Gastrocnemius medialis (tissue), 4 donors: ENCODE measurements at regions of chr17 and their contacts with region 1.

Region 1: DNA sequence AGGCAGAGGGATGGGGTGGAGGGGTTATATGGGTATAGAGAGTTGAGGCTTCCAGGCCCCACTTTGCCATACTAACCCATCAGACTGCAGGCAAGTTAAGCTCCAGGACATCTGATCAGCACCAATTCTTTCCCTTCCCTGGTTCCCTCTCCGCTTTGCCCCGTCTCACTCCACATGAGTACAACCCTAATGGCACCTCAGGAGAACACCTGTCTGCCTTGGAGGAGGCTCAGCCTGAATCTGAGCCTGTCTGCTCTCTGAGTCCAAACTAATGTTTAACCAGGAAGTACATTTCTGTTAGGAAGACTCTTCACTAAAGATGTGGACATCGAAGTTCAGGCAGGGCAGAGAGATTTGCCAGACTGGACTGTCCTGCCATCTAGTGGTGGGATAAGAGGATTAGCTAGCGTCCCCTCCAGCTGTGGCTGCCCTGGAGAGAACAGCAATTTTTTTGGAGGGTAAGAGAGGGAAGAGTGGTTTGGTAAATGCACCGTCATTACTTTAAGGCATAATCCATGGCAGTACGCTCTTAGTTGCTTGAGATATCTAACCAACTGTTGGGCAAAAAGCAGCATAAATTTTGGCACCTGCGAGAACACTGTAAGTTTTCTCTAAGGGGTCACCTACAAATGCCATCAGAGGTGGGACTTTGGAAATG is 29.2 kb upstream of the LRRC75A start:
- DNase-seq: peak; percentile 60 to 72
- ATAC-seq: peak; percentile 98 to 99
- H3K4me3 ChIP-seq: no peak overlapping the region
- H3K27ac ChIP-seq: no peak overlapping the region
- H3K4me1 ChIP-seq: peaks cover 0 to 6% of the 10 kb centered on the region in 2 donors
- H3K27me3 ChIP-seq: peaks cover 0 to 18% (median 14%) of the 10 kb centered on the region in 3 donors
- CTCF ChIP-seq: peak; percentile 85 to 96 (median 90)
- POLR2A ChIP-seq: no peak

Region 2: GRCh38 chr17:16380640-16381495 is 140.3 kb before region 1 on chr17 and contains the start of gene UBB:
- in situ Hi-C with region 1: no loop called
- intact Hi-C with region 1: loop called (anchors 1 kb)
- DNase-seq: peak; percentile 97 to 98
- ATAC-seq: peak; percentile 94 to 95
- H3K4me3 ChIP-seq: peak within 1 kb of the TSS; percentile 77 to 85 (median 78)
- H3K27ac ChIP-seq: peak within 1 kb of the TSS; percentile 85 to 94 (median 91)
- H3K4me1 ChIP-seq: peaks cover 37 to 39% of the 10 kb centered on the region in 2 donors
- H3K27me3 ChIP-seq: no peaks in the 10 kb centered on the region
- CTCF ChIP-seq: peak in 3 of 5 experiments; percentile 15 to 28 (median 18)
- POLR2A ChIP-seq: peak; percentile 95 to 97
- total RNA-seq, gene UBB: 1,099 to 1,543 (median 1,420) TPM

Region 3: DNA sequence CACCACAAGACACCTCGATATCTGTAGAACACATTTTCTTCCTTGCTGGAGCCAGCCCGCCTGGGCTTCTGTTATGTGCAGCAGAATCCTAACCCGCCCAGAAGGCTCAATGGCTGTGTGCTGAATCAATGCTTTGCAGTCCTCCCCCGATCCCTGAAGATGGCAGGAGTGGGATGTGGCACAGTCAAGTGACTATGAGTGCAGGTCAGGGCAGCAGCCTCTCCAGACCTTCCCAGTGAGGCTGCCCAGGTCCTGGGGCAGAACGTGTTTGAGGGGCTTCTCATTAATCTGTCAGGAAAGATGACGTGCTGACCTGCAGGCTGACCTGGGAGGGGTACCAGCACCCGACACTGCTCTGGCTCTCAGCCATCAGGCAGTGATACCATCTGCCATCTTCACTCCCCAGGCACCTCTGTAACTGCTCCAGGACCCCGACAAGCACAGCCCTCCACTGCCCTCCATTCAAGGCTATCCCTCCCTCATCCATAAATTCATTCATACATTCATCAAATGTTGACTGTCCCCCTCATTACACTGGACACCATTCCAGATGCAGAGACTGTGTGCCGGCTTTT is 64.4 kb before region 1 on chr17:
- in situ Hi-C with region 1: loop called (anchors 5 to 10 kb)
- intact Hi-C with region 1: loop called (anchors 1 kb)
- DNase-seq: no peak
- ATAC-seq: no peak
- H3K4me3 ChIP-seq: no peak overlapping the region
- H3K27ac ChIP-seq: no peak overlapping the region
- H3K4me1 ChIP-seq: no peaks in the 10 kb centered on the region
- H3K27me3 ChIP-seq: no peaks in the 10 kb centered on the region
- CTCF ChIP-seq: no peak
- POLR2A ChIP-seq: no peak

Region 4: DNA sequence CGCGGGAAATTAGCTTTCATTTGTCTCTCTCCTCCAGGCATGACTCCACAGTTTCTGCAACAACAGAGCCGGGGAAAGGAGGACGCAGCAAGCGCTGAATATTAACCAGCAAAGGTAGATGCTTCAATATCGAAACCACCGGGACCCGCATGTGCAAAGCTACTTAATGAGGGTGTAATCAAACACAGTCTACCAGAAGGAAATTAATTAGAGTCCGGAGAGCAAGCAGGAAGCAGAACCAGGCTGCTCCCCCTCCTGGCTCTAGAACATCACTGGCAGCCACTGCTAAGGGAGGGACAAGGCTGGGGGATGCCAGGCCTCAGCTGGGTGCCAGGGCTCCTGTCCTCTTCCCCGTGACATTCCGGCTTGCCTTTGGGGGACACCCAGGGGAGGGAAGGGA is 50.9 kb before region 1 on chr17:
- in situ Hi-C with region 1: no loop called
- intact Hi-C with region 1: no loop called
- DNase-seq: no peak
- ATAC-seq: peak in 1 of 2 donors; percentile 35
- H3K4me3 ChIP-seq: no peak overlapping the region
- H3K27ac ChIP-seq: peak overlapping the region in 1 of 4 donors; percentile 7
- H3K4me1 ChIP-seq: peaks cover 7 to 15% of the 10 kb centered on the region in 2 donors
- H3K27me3 ChIP-seq: peaks cover 0 to 15% (median 2%) of the 10 kb centered on the region in 3 donors
- CTCF ChIP-seq: no peak
- POLR2A ChIP-seq: no peak

Region 5: DNA sequence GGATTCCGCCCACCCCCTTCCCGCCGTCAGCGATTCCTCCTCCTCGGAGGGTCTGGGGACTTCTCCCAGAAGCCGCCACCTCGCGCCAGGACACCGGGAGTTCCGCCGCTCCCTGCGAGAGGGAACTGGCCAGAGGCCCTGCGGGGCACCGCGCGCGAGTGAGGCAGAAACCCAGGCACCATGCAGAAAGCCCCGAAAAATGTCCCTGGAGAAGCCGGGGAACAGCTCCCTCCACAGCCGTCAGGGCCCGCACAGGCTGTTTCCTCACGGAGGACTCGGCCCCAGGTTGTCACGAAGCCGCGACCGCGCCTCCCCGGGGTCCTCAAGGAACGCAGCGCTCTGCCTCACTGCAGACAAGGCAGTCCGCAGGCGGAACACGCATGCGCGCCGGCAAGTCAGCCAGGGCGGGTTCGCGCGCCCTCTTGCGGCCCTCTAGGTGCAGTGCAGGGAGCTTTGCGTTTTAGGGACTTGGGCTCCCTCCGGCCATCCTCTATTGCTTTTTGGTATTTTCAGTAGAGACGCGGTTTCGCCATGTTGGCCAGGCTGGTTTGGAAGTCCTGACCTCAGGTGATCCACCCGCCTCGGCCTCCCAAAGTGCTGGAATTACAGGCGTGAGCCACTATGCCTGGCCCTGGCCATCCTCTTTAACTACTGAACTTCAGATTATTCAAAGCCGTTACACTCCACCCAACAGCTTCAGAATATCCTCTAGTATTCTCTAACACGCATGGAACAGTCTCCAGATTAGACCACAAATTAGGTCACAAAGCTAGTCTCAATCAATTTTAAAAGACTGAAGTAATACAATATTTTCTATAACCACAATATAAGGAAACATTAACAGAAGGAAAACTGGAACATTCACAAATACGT is 68.1 kb after region 1 on chr17:
- in situ Hi-C with region 1: no loop called
- intact Hi-C with region 1: no loop called
- DNase-seq: peak; percentile 79 to 84
- ATAC-seq: peak; percentile 90 to 92
- H3K4me3 ChIP-seq: peak overlapping the region; percentile 64 to 79 (median 68)
- H3K27ac ChIP-seq: peak overlapping the region; percentile 35 to 62 (median 55)
- H3K4me1 ChIP-seq: peaks cover 4 to 8% of the 10 kb centered on the region in 2 donors
- H3K27me3 ChIP-seq: peaks cover 0 to 3% (median 0%) of the 10 kb centered on the region in 3 donors
- CTCF ChIP-seq: peak; percentile 91 to 100 (median 92)
- POLR2A ChIP-seq: no peak

Region 6: GRCh38 chr17:17108451-17109049 is 587.4 kb after region 1 on chr17:
- in situ Hi-C with region 1: no loop called
- intact Hi-C with region 1: no loop called
- DNase-seq: no peak
- ATAC-seq: peak; percentile 31 to 38
- H3K4me3 ChIP-seq: no peak overlapping the region
- H3K27ac ChIP-seq: peak overlapping the region; percentile 65 to 73 (median 68)
- H3K4me1 ChIP-seq: peaks cover 83 to 89% of the 10 kb centered on the region in 2 donors
- H3K27me3 ChIP-seq: no peaks in the 10 kb centered on the region
- CTCF ChIP-seq: peak in 1 of 5 experiments; percentile 8
- POLR2A ChIP-seq: no peak